ENCODE measurements at regions of chr4 and their contacts with region 1.

Region 1: DNA sequence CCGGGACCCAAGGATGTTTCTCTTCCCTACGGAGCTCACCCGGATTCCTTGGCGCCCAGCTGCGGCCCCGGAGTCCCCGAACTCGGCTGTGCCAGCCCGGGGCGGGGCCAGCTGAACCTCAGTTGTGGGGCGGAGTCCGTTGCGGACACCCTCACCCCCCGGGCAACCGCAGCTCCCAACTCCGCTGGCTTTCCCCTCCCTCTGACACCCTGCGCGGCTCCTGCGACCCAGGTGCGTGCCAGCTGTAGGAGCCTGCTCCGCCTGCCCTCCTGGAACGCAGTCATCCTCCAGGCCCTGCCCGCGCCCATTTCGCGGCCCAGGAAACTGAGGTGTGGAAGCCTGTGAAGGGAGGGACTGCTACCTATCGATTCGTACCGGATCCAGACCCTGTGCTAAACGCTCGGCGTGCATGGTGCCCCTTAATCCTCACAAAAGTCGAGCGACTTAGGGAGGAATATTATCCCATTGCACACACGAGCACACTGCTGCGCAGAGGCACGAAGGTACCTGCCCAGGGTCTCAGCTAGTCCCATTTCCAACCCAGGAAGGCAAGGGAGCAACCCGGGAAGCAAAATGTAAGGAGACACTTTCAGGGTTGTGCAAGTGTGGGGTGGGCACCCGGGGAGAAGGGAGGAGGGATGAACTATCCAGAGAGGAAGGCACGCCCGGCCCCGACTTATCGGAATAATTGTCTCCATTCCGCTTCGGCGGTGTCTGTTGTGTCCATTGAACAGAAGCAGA is 12.3 kb downstream of the MSX1 start:
- DNase-seq: no peak
- H3K4me3 ChIP-seq: no peak overlapping the region
- H3K4me3 Mint-ChIP-seq: no peak overlapping the region
- H3K27ac Mint-ChIP-seq: no peak overlapping the region
- H3K4me1 ChIP-seq: no peaks in the 10 kb centered on the region
- H3K4me1 Mint-ChIP-seq: no peaks in the 10 kb centered on the region
- H3K27me3 ChIP-seq: no peaks in the 10 kb centered on the region
- H3K27me3 Mint-ChIP-seq: peaks cover 4% of the 10 kb centered on the region
- CTCF ChIP-seq: no peak

Region 2: DNA sequence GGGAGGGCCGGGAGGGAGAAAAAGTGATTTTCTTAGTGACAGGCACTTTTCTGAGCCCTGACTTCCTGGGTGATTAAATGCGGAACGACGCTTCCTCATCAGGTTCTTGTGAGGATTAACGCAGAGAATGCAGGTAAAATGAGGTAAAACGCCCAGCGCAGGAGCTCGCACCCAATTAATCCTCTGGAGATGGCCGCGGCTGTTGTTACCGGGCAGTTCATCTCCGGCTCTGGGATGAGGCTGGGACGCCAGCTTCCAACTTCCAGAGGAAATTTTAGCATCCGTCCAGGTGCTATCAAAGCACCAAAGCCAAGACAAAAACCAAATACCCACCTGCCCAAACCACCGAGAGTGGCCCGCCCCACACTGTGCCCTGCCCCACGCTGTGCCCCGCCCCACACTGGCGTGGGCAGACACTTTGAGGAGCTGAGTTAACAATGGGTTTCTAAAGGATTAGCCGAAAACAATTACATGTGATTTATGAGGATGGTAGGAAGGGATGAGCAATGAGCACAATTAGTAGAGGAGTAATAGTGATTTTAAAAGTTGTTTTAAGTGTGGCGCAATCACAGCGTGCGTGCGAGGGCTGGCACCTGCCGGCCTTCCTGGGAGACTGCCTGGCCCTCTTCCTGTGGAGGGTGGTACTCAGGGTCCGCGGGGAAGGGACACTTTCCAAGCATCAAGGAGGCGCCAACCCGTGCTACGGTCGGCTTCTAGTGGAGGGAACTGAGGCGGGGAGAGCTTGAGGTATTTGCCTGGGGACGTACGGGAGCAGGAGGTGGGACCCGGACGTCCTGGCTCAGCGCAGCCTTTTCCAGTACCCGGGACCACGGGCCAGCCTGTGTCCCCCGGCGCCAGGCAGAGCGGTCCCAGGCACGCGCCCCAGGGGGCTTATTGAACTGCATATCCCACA is 1147.2 kb before region 1 on chr4:
- CTCF ChIA-PET with region 1: no interaction called
- POLR2A ChIA-PET with region 1: interaction called, 13 read pairs
- intact Hi-C with region 1: no loop called
- DNase-seq: no peak
- H3K4me3 ChIP-seq: no peak overlapping the region
- H3K4me3 Mint-ChIP-seq: no peak overlapping the region
- H3K27ac Mint-ChIP-seq: no peak overlapping the region
- H3K4me1 ChIP-seq: no peaks in the 10 kb centered on the region
- H3K4me1 Mint-ChIP-seq: no peaks in the 10 kb centered on the region
- H3K27me3 ChIP-seq: no peaks in the 10 kb centered on the region; the same call in 1 of the 2 replicates
- H3K27me3 Mint-ChIP-seq: peaks cover 7% of the 10 kb centered on the region
- CTCF ChIP-seq: no peak

Region 3: DNA sequence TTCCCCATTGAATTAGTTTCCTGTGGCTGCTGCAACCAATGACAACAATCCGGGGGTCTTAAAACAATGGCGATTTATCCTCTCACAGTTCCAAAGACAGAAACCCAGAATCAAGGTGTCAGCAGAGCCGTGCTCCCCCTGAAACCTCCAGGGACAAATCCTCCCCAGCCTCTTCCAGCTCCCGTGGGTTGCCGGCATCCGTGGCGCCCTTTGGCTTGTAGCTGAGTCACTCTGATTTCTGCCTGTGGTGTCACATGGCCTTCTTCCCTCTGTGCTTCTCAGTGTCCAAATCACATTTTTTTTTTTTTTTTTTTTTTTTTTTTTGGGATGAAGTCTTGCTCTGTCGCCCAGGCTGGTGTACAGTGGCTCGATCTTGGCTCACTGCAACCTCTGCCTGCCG is 265.4 kb before region 1 on chr4:
- CTCF ChIA-PET with region 1: interaction called, 11 read pairs
- POLR2A ChIA-PET with region 1: no interaction called
- intact Hi-C with region 1: no loop called
- DNase-seq: no peak
- H3K4me3 ChIP-seq: no peak overlapping the region
- H3K4me3 Mint-ChIP-seq: no peak overlapping the region
- H3K27ac Mint-ChIP-seq: peak overlapping the region; percentile 18
- H3K4me1 ChIP-seq: peaks cover 35% of the 10 kb centered on the region
- H3K4me1 Mint-ChIP-seq: peaks cover 21% of the 10 kb centered on the region
- H3K27me3 ChIP-seq: no peaks in the 10 kb centered on the region
- H3K27me3 Mint-ChIP-seq: no peaks in the 10 kb centered on the region
- CTCF ChIP-seq: no peak